ENCODE measurements at regions of chr16 and their contacts with region 1.

Region 1: GRCh38 chr16:75519881-75520280 is 16.0 kb downstream of the CHST5 start:
- DNase-seq: no peak
- CTCF ChIP-seq: no peak

Region 2: GRCh38 chr16:75464130-75464918 is 55.6 kb before region 1 on chr16 and contains the start of gene TMEM170A:
- CTCF ChIA-PET with region 1: interaction called, 43 read pairs
- POLR2A ChIA-PET with region 1: no interaction called
- DNase-seq: peak; percentile 97
- CTCF ChIP-seq: peak; percentile 100

Region 3: DNA sequence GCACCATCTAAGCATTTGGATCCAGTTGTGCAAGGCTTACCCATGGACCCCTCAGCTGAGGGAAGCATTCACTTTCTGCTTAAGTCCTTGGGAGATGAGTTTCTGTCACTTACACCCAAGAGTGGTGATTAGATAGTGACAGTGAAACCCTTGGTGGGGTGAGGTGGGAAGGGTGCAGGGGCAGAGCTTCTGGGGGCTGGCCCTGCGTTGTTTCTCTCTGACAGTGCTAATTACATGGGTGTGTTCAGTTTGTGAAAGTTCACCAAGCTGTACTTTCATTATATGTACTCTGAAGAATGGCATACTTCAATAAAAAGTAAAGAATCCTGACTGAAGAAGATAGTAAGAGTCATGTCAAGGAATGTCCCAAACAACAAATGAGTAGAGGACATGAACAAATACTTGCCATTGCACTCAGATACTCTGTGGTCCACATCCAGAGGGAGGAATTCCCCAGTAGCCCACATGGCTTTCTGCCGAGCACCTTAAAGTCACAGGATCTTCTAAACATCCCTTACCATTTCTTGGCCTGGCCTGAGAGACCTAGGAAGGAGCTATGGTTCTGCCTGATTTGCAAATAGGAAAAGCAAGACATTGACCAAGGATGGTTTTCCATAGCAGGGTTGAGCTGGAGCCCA is 33.1 kb before region 1 on chr16:
- CTCF ChIA-PET with region 1: interaction called, 24 read pairs
- POLR2A ChIA-PET with region 1: no interaction called
- DNase-seq: peak; percentile 61
- CTCF ChIP-seq: no peak

Region 4: DNA sequence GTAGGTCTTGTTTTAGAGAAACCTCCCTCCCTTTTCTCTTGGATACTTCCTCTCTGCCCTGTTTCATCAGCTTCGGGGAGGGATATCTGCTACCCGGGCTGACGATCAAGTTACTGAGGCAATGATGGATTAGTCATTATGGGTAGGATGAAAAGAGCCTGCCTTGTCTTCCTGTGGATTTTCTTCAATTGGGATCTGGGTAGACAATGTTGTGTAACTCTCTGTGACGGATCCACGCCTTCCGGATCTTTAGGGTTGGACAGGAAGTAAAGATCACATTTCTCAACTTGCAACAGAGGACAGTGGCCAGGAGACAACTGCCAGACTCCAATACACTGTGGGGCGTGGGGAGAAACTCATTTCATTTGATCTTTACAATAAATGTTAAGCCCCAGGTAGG is 13.3 kb before region 1 on chr16:
- CTCF ChIA-PET with region 1: interaction called, 22 read pairs
- POLR2A ChIA-PET with region 1: no interaction called
- DNase-seq: no peak
- CTCF ChIP-seq: no peak

Region 5: DNA sequence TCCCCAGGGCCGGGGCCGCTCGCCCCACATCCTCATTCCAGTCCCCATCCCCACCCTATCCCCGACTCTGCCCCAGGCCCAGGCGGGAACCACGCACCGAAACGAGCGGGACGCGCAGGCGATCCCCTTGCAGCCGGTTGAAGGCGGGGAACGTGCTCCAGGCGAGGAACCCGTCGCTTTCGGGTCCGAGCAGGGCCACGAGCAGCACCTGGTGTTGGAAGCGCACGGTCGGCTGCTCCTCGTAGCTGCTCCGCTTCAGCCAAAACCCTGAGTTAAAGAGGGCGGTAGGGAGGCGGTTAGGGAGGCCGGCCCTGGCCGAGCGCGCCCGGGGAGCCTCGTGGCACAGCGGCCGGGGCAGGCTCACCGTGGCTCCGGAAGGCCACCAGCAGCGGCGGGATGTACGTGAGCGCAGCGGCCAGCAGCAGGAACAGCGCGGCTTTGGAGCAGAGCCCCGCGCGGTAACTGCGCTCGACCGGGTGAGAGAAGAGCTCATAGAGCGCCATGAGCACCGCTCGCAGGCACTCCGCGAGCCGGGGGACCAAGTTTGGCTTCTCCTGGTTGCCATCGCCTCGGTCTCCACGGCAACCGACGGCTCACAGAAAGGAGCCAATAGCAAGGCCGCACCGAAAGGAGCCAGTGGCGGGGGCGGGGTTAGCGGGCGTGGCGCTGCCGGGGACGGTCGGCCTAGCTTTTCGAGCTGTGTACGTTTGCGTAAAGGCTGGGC is 36.0 kb after region 1 on chr16 and contains the start of gene TMEM231:
- CTCF ChIA-PET with region 1: interaction called, 104 read pairs
- POLR2A ChIA-PET with region 1: no interaction called
- DNase-seq: peak; percentile 97
- CTCF ChIP-seq: no peak

Region 6: DNA sequence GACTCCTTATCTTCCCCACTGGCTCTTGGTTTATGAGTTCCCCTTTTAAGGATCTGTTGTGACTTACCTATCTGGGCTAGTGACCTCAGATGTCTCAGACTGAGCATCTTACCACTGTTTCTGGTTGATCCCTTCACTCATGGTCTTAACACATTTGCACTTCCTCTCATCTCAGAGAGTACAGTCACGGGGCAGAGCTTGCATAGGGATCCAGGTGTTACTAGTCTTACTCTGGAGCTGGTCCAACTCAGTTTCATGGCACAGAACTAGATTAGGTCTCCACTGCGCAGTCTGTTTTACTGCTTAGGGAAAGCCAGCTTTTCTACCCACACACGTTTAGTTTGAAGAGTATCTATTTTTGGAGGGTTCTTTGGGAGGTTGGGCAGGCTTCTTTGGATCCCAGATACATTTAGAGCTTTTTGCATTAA is 56.5 kb after region 1 on chr16:
- CTCF ChIA-PET with region 1: interaction called, 10 read pairs
- POLR2A ChIA-PET with region 1: interaction called, 9 read pairs
- DNase-seq: peak; percentile 51
- CTCF ChIP-seq: no peak